HepG2 (cell line): ENCODE measurements at regions of chr22 and their contacts with region 1.

Region 1: DNA sequence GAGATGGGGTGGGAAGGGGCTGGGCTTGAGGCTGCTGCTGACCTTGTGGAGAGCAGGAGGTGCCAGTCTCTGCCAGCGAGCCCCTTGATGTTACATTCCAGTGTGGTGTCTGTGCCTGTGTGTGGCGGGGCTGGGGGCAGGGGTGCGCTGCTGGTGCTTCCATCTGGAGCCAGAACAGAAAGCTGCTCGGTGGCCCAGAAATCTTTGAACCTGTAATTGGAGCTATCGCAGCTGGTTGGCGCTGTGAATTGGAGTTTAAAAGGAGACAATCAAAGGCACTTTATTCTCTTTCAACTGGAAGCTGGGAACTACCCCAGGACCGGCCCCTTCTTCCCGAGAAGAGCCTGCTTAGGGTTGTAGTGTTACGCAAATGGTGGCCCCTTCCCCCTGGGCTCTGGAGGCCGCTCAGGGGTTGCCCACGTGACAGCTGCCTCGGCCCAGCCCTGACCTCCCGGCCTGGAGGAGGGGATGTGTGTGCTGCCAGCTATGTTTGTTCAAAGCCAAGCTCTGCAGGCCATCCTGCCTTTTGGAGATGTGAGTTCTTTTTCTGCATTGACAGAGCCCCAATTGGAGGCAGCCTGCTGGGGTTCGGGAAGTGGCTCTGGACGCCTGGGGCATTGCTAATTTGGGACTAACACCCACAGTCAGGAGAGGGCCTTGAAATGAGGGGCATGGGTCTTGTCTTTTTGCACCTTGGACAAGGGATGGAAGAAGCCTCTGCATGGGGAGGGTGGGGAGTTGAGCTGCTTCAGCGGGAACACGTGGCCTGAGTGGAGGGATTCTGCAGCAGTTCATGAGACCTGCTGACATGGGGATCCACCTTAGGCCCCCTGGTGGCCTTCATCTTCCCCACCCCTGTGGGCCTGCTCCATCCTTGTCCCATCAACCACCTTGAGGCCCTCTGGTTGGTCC is 14.0 kb upstream of the ARSA start:
- DNase-seq: peak; percentile 95
- ATAC-seq: peak; percentile 86
- H3K4me3 ChIP-seq: peak overlapping the region; percentile 38 to 62 (median 38); a peak in 5 of 6 replicates
- H3K27ac ChIP-seq: peak overlapping the region; percentile 94
- H3K4me1 ChIP-seq: peaks cover 60% of the 10 kb centered on the region
- H3K27me3 ChIP-seq: no peaks in the 10 kb centered on the region
- CTCF ChIP-seq: peak; percentile 60
- EP300 ChIP-seq: peak; percentile 24 to 86; a peak in 3 of 4 replicates
- POLR2A ChIP-seq: peak; percentile 18 to 40; a peak in 2 of 4 replicates
- RAD21 ChIP-seq: peak; percentile 60

Region 2: GRCh38 chr22:50569916-50570535 is 71.9 kb before region 1 on chr22:
- CTCF ChIA-PET with region 1: no interaction called
- POLR2A ChIA-PET with region 1: no interaction called
- in situ Hi-C with region 1: no loop called
- intact Hi-C with region 1: no loop called
- DNase-seq: no peak
- ATAC-seq: no peak
- H3K4me3 ChIP-seq: no peak overlapping the region
- H3K27ac ChIP-seq: peak overlapping the region; percentile 83
- H3K4me1 ChIP-seq: peaks cover 29% of the 10 kb centered on the region
- H3K27me3 ChIP-seq: no peaks in the 10 kb centered on the region
- CTCF ChIP-seq: no peak
- EP300 ChIP-seq: no peak
- POLR2A ChIP-seq: no peak
- RAD21 ChIP-seq: no peak

Region 3: DNA sequence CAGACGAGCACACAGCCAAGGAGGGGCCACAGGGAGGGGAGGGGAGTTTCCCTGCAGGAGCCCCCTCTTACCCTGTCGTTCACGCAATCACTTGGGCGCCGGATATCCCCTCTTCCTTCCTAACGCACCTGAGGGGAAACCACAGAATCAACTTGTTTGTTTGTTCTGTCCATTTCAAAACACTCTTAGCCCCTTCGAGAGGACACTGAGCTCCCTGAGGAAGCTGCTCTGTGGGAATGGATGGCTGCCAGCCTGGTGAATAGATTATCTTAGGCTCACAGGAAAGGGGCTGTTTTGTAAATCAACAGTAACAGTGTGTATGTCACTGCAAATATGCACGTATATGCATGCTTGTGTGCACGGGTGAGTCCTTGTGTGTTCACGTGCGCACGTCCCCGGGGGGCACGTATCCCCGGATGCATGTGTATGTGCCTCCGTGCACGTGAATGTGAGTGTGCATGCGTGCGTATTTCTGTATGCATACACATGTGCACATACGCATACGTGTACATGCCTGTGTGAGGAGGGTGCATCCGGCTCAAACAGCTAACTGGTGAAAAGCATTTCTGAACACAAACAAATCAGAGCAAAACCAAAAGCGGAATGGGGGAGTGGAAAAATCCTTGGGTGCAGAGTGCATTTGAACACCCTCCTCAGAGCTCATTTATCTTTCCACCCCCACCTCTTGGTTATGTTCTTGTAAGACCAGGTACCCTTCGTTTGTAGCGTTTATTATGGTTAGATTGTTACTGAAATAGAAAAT is 21.2 kb before region 1 on chr22:
- CTCF ChIA-PET with region 1: interaction called, 5 read pairs
- POLR2A ChIA-PET with region 1: interaction called, 56 read pairs
- in situ Hi-C with region 1: no loop called
- intact Hi-C with region 1: no loop called
- DNase-seq: peak; percentile 25
- ATAC-seq: peak; percentile 67
- H3K4me3 ChIP-seq: peak overlapping the region; percentile 46 to 61 (median 47)
- H3K27ac ChIP-seq: no peak overlapping the region
- H3K4me1 ChIP-seq: peaks cover 54% of the 10 kb centered on the region
- H3K27me3 ChIP-seq: no peaks in the 10 kb centered on the region
- CTCF ChIP-seq: peak; percentile 82
- EP300 ChIP-seq: no peak
- POLR2A ChIP-seq: no peak
- RAD21 ChIP-seq: no peak

Region 4: GRCh38 chr22:50627642-50628542 is 14.1 kb before region 1 on chr22 and contains the start of gene ARSA:
- CTCF ChIA-PET with region 1: interaction called, 14 read pairs
- POLR2A ChIA-PET with region 1: interaction called, 56 read pairs
- in situ Hi-C with region 1: no loop called
- intact Hi-C with region 1: loop called (anchors 1 kb)
- DNase-seq: peak; percentile 70
- ATAC-seq: peak; percentile 89
- H3K4me3 ChIP-seq: peak within 1 kb of the TSS; percentile 68 to 88 (median 86)
- H3K27ac ChIP-seq: peak within 1 kb of the TSS; percentile 79
- H3K4me1 ChIP-seq: peaks cover 41% of the 10 kb centered on the region
- H3K27me3 ChIP-seq: no peaks in the 10 kb centered on the region; a peak in 1 of 5 replicates
- CTCF ChIP-seq: peak; percentile 81
- EP300 ChIP-seq: no peak
- POLR2A ChIP-seq: peak; percentile 79 to 92
- RAD21 ChIP-seq: peak; percentile 63
- total RNA-seq, gene ARSA: 3.8 and 9.0 TPM in 2 replicates

Region 5: GRCh38 chr22:50656122-50657070 is 14.4 kb after region 1 on chr22:
- CTCF ChIA-PET with region 1: no interaction called
- POLR2A ChIA-PET with region 1: interaction called, 15 read pairs
- in situ Hi-C with region 1: no loop called
- intact Hi-C with region 1: no loop called
- DNase-seq: peak; percentile 58
- ATAC-seq: peak; percentile 89
- H3K4me3 ChIP-seq: peak overlapping the region in 1 of 3 experiments; percentile 49; a peak in 2 of 6 replicates
- H3K27ac ChIP-seq: no peak overlapping the region
- H3K4me1 ChIP-seq: peaks cover 31% of the 10 kb centered on the region
- H3K27me3 ChIP-seq: no peaks in the 10 kb centered on the region; a peak in 1 of 5 replicates
- CTCF ChIP-seq: no peak
- EP300 ChIP-seq: no peak; a peak in 2 of 4 replicates
- POLR2A ChIP-seq: no peak
- RAD21 ChIP-seq: no peak

Region 6: DNA sequence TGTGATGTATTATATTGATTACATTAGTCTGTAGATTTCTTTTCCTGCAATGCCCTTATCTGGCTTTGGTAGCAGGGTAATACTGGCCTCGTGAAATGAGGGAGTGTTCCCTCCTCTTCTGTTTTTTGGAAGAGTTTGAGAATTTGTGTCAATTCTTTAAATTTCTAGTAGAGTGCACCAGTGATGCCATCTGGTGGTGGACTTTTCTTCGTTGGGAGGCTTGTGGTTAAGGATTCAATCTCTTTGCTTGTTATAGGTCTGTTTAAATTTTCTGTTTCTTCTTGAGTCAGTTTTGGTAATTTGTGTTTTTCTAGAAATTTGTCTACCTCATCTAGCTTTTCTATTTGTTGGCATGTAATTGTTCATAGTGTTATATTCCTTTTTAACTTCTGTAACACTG is 49.6 kb after region 1 on chr22:
- CTCF ChIA-PET with region 1: interaction called, 3 read pairs
- POLR2A ChIA-PET with region 1: interaction called, 51 read pairs
- in situ Hi-C with region 1: no loop called
- intact Hi-C with region 1: loop called (anchors 5 kb)
- DNase-seq: peak; percentile 33
- ATAC-seq: no peak
- H3K4me3 ChIP-seq: no peak overlapping the region
- H3K27ac ChIP-seq: no peak overlapping the region
- H3K4me1 ChIP-seq: peaks cover 16% of the 10 kb centered on the region
- H3K27me3 ChIP-seq: no peaks in the 10 kb centered on the region
- CTCF ChIP-seq: peak; percentile 76
- EP300 ChIP-seq: no peak
- POLR2A ChIP-seq: no peak
- RAD21 ChIP-seq: peak; percentile 78

Region 7: GRCh38 chr22:50696797-50697561 is 55.0 kb after region 1 on chr22:
- CTCF ChIA-PET with region 1: interaction called, 3 read pairs
- POLR2A ChIA-PET with region 1: interaction called, 51 read pairs
- in situ Hi-C with region 1: no loop called
- intact Hi-C with region 1: loop called (anchors 5 kb)
- DNase-seq: no peak
- ATAC-seq: no peak
- H3K4me3 ChIP-seq: peak overlapping the region in 2 of 3 experiments; percentile 82 to 89; a peak in 3 of 6 replicates
- H3K27ac ChIP-seq: no peak overlapping the region
- H3K4me1 ChIP-seq: peaks cover 42% of the 10 kb centered on the region
- H3K27me3 ChIP-seq: no peaks in the 10 kb centered on the region
- CTCF ChIP-seq: no peak
- EP300 ChIP-seq: no peak
- POLR2A ChIP-seq: no peak
- RAD21 ChIP-seq: no peak